Activated naive CD4-positive, alpha-beta T cell treated with anti-CD3 and anti-CD28 coated beads for 36 hours (primary cell): ENCODE measurements at regions of chr4 and their contacts with region 1.

Region 1: DNA sequence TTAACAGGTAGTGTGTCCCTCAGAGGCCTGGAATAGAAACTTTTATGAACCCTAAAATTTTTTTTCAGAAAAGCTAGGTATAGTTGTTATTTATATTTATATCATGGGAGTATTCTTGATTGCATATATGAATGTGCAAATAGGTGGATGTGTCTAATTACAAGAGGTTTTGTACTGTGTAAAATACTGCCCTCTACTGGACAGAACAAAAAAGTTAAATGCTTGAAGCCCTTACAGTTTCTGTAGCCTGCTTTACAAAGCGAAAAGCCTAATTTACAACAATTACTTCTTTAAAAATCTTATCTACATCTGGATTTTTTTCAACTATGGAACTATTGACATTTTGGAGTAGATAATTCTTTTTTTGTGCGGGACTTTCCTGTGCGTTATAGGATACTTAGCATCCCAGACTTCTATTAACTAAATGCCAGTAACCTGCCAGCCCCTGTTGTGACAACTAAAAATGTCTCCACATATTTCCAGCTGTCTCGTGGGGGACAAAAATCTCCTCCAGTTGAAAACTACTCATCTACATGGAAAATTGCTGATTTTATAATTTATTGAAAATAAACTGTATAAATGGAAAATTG is 35.1 kb downstream of the ENPEP start:
- DNase-seq: no peak
- H3K4me3 Mint-ChIP-seq: no peak overlapping the region
- H3K27ac Mint-ChIP-seq: no peak overlapping the region
- H3K4me1 Mint-ChIP-seq: peaks cover 9% of the 10 kb centered on the region
- H3K27me3 Mint-ChIP-seq: no peaks in the 10 kb centered on the region

Region 2: GRCh38 chr4:110049951-110050925 is 460.8 kb before region 1 on chr4:
- CTCF ChIA-PET with region 1: interaction called, 40 read pairs
- intact Hi-C with region 1: loop called (anchors 1 kb)
- DNase-seq: peak; percentile 71
- H3K4me3 Mint-ChIP-seq: no peak overlapping the region
- H3K27ac Mint-ChIP-seq: no peak overlapping the region
- H3K4me1 Mint-ChIP-seq: no peaks in the 10 kb centered on the region
- H3K27me3 Mint-ChIP-seq: no peaks in the 10 kb centered on the region

Region 3: GRCh38 chr4:110224812-110225211 is 286.2 kb before region 1 on chr4:
- CTCF ChIA-PET with region 1: no interaction called
- intact Hi-C with region 1: no loop called
- DNase-seq: no peak
- H3K4me3 Mint-ChIP-seq: no peak overlapping the region
- H3K27ac Mint-ChIP-seq: no peak overlapping the region
- H3K4me1 Mint-ChIP-seq: no peaks in the 10 kb centered on the region
- H3K27me3 Mint-ChIP-seq: peaks cover 2% of the 10 kb centered on the region

Region 4: GRCh38 chr4:110310795-110311194 is 200.3 kb before region 1 on chr4:
- CTCF ChIA-PET with region 1: interaction called, 15 read pairs
- intact Hi-C with region 1: loop called (anchors 1 kb)
- DNase-seq: no peak
- H3K4me3 Mint-ChIP-seq: no peak overlapping the region
- H3K27ac Mint-ChIP-seq: no peak overlapping the region
- H3K4me1 Mint-ChIP-seq: no peaks in the 10 kb centered on the region
- H3K27me3 Mint-ChIP-seq: peaks cover 20% of the 10 kb centered on the region